Activated CD8-positive, alpha-beta T cell treated with anti-CD3 and anti-CD28 coated beads, Interleukin-2, amount 10 ng/mL, durations not matched to agents 7 days and 5 days (primary cell): ENCODE measurements at regions of chr9 and their contacts with region 1.

Region 1: GRCh38 chr9:17462869-17463464 is 115.9 kb upstream of the SH3GL2 start:
- DNase-seq: peak; percentile 43
- ATAC-seq: no peak
- H3K4me3 Mint-ChIP-seq: no peak overlapping the region
- H3K27ac Mint-ChIP-seq: no peak overlapping the region
- H3K4me1 Mint-ChIP-seq: no peaks in the 10 kb centered on the region
- H3K27me3 Mint-ChIP-seq: no peaks in the 10 kb centered on the region

Region 2: GRCh38 chr9:17116400-17116837 is 346.5 kb before region 1 on chr9:
- CTCF ChIA-PET with region 1: interaction called, 21 read pairs
- POLR2A ChIA-PET with region 1: no interaction called
- DNase-seq: no peak
- ATAC-seq: no peak
- H3K4me3 Mint-ChIP-seq: no peak overlapping the region
- H3K27ac Mint-ChIP-seq: no peak overlapping the region
- H3K4me1 Mint-ChIP-seq: no peaks in the 10 kb centered on the region
- H3K27me3 Mint-ChIP-seq: no peaks in the 10 kb centered on the region